ENCODE measurements at regions of chr1 and their contacts with region 1.

Region 1: GRCh38 chr1:32335790-32336590 is at the start of gene MARCKSL1:
- DNase-seq: peak; percentile 80 to 89 (median 82)
- H3K4me3 ChIP-seq: peak within 1 kb of the TSS; percentile 58
- H3K4me3 Mint-ChIP-seq: peak within 1 kb of the TSS; percentile 76 to 86 (median 85)
- H3K27ac ChIP-seq: peak within 1 kb of the TSS; percentile 40
- H3K27ac Mint-ChIP-seq: peak within 1 kb of the TSS in 6 of 8 donors; percentile 68 to 89 (median 76)
- H3K4me1 ChIP-seq: peaks cover 27% of the 10 kb centered on the region
- H3K4me1 Mint-ChIP-seq: peaks cover 31 to 42% (median 42%) of the 10 kb centered on the region in 3 donors
- H3K27me3 ChIP-seq: no peaks in the 10 kb centered on the region
- H3K27me3 Mint-ChIP-seq: peaks cover 0 to 2% of the 10 kb centered on the region in 2 donors
- total RNA-seq, gene MARCKSL1: 11.6 to 12.1 TPM

Region 2: DNA sequence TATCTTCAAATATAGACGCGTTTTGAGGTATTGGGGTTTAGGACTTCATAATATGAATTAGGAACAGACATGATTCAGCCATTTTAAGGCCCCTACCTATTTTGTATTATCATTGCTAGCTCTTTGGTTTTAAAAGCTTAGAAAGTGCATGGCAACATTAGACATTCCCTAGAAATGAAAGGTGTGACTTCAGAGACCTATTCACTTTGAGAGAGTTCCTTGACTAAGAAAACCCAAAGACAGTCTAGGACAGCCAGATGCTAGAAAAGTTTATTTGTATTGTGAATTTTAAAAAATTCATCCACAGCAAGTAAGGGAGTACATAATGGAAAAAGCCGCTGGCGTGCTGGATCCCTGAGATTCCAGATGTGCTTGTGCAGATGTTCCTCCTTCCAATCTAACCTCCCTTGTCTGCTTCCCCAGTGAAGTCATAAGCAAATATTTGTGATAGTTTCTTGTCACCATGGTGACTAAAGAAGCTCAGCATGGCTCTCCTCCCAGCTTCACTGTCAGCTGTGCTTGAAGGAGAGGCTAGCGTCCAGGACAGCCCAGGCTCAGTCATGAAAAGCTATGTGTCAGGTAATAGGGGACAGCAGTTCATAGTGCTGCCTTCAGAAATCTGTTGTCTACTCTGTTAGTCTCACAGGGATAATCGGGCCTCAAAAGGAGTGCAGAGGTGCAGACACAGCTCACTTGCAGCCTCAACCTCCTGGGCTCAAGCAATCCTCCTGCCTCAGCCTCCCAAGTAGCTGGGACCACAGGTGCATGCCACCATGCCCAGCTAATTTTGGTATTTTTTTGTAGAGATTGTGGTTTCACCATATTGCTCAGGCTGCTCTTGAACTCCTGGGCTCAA is 193.3 kb before region 1 on chr1:
- CTCF ChIA-PET with region 1: no interaction called
- POLR2A ChIA-PET with region 1: no interaction called
- DNase-seq: no peak
- H3K4me3 ChIP-seq: no peak overlapping the region
- H3K4me3 Mint-ChIP-seq: peak overlapping the region in 1 of 7 donors; percentile 37
- H3K27ac ChIP-seq: no peak overlapping the region
- H3K27ac Mint-ChIP-seq: peak overlapping the region in 4 of 8 donors; percentile 24 to 82 (median 52)
- H3K4me1 ChIP-seq: peaks cover 14% of the 10 kb centered on the region
- H3K4me1 Mint-ChIP-seq: peaks cover 57 to 76% (median 75%) of the 10 kb centered on the region in 3 donors
- H3K27me3 ChIP-seq: no peaks in the 10 kb centered on the region
- H3K27me3 Mint-ChIP-seq: no peaks in the 10 kb centered on the region

Region 3: GRCh38 chr1:32215629-32216480 is 120.1 kb before region 1 on chr1:
- CTCF ChIA-PET with region 1: interaction called, 11 read pairs
- POLR2A ChIA-PET with region 1: interaction called, 4 read pairs
- DNase-seq: peak; percentile 32 to 66 (median 38)
- H3K4me3 ChIP-seq: no peak overlapping the region
- H3K4me3 Mint-ChIP-seq: peak overlapping the region in 1 of 7 donors; percentile 18
- H3K27ac ChIP-seq: no peak overlapping the region
- H3K27ac Mint-ChIP-seq: peak overlapping the region in 7 of 8 donors; percentile 12 to 72 (median 33)
- H3K4me1 ChIP-seq: peaks cover 14% of the 10 kb centered on the region
- H3K4me1 Mint-ChIP-seq: peaks cover 6 to 20% (median 20%) of the 10 kb centered on the region in 3 donors
- H3K27me3 ChIP-seq: no peaks in the 10 kb centered on the region
- H3K27me3 Mint-ChIP-seq: no peaks in the 10 kb centered on the region

Region 4: GRCh38 chr1:32247983-32248889 is 87.8 kb before region 1 on chr1:
- CTCF ChIA-PET with region 1: interaction called, 10 read pairs
- POLR2A ChIA-PET with region 1: interaction called, 8 read pairs
- DNase-seq: peak; percentile 65 to 84 (median 68)
- H3K4me3 ChIP-seq: peak overlapping the region; percentile 60
- H3K4me3 Mint-ChIP-seq: peak overlapping the region; percentile 62 to 99 (median 85)
- H3K27ac ChIP-seq: no peak overlapping the region
- H3K27ac Mint-ChIP-seq: peak overlapping the region; percentile 72 to 100 (median 98)
- H3K4me1 ChIP-seq: peaks cover 48% of the 10 kb centered on the region
- H3K4me1 Mint-ChIP-seq: peaks cover 36 to 48% (median 40%) of the 10 kb centered on the region in 3 donors
- H3K27me3 ChIP-seq: no peaks in the 10 kb centered on the region
- H3K27me3 Mint-ChIP-seq: peaks cover 0 to 4% of the 10 kb centered on the region in 2 donors

Region 5: GRCh38 chr1:32321712-32322291 is 14.2 kb before region 1 on chr1:
- CTCF ChIA-PET with region 1: interaction called, 12 read pairs
- POLR2A ChIA-PET with region 1: interaction called, 28 read pairs
- DNase-seq: peak in 2 of 5 donors; percentile 49 to 52
- H3K4me3 ChIP-seq: peak overlapping the region; percentile 26
- H3K4me3 Mint-ChIP-seq: peak overlapping the region; percentile 41 to 86 (median 76)
- H3K27ac ChIP-seq: peak overlapping the region; percentile 0
- H3K27ac Mint-ChIP-seq: peak overlapping the region; percentile 82 to 98 (median 93)
- H3K4me1 ChIP-seq: peaks cover 49% of the 10 kb centered on the region
- H3K4me1 Mint-ChIP-seq: peaks cover 31 to 52% (median 41%) of the 10 kb centered on the region in 3 donors
- H3K27me3 ChIP-seq: no peaks in the 10 kb centered on the region
- H3K27me3 Mint-ChIP-seq: no peaks in the 10 kb centered on the region

Region 6: GRCh38 chr1:32394141-32394889 is 58.3 kb after region 1 on chr1 and contains the start of gene BSDC1:
- CTCF ChIA-PET with region 1: interaction called, 4 read pairs
- POLR2A ChIA-PET with region 1: interaction called, 18 read pairs
- DNase-seq: peak; percentile 96 to 98 (median 97)
- H3K4me3 ChIP-seq: peak within 1 kb of the TSS; percentile 99
- H3K4me3 Mint-ChIP-seq: peak within 1 kb of the TSS; percentile 92 to 100 (median 98)
- H3K27ac ChIP-seq: peak within 1 kb of the TSS; percentile 99
- H3K27ac Mint-ChIP-seq: peak within 1 kb of the TSS; percentile 84 to 100 (median 100)
- H3K4me1 ChIP-seq: peaks cover 39% of the 10 kb centered on the region
- H3K4me1 Mint-ChIP-seq: peaks cover 12 to 26% (median 14%) of the 10 kb centered on the region in 3 donors
- H3K27me3 ChIP-seq: no peaks in the 10 kb centered on the region
- H3K27me3 Mint-ChIP-seq: peaks cover 0 to 2% of the 10 kb centered on the region in 2 donors
- total RNA-seq, gene BSDC1: 35.1 to 37.6 TPM

Region 7: DNA sequence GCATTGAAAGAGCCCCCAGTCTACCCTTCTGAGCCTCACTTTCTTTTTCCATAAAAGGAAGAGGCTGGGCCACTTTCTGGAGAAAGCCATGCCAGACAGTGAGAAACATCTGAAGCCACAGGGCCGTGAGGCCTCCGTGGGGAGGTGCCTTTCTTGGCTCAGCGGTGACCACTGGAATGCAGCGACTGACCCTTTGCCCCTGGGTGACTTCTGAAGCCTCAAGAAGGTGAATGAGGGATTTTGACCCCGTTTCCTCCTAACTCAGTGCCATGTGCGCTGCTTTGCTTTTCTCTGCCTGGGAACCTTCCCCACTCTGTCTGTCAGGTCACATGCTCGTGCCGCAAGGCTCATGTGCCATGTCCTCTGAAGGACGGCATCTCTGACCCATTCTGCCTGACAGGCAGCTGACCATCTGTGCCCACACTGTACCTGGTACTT is 1029.6 kb after region 1 on chr1:
- CTCF ChIA-PET with region 1: no interaction called
- POLR2A ChIA-PET with region 1: no interaction called
- DNase-seq: no peak
- H3K4me3 ChIP-seq: no peak overlapping the region
- H3K4me3 Mint-ChIP-seq: no peak overlapping the region
- H3K27ac ChIP-seq: no peak overlapping the region
- H3K27ac Mint-ChIP-seq: no peak overlapping the region
- H3K4me1 ChIP-seq: no peaks in the 10 kb centered on the region
- H3K4me1 Mint-ChIP-seq: peaks cover 0 to 3% (median 1%) of the 10 kb centered on the region in 3 donors
- H3K27me3 ChIP-seq: no peaks in the 10 kb centered on the region
- H3K27me3 Mint-ChIP-seq: peaks cover 5 to 10% of the 10 kb centered on the region in 2 donors